CD4-positive, alpha-beta memory T cell (primary cell): ENCODE measurements at regions of chr11 and their contacts with region 1.

Region 1: GRCh38 chr11:96215110-96215782 is 127.7 kb downstream of the MAML2 start:
- DNase-seq: peak; percentile 41 to 47 (median 45)
- H3K4me3 ChIP-seq: peak overlapping the region in 1 of 2 donors; percentile 14
- H3K4me3 Mint-ChIP-seq: peak overlapping the region; percentile 37 to 82 (median 71)
- H3K27ac ChIP-seq: peak overlapping the region; percentile 62
- H3K27ac Mint-ChIP-seq: peak overlapping the region; percentile 89 to 96 (median 94)
- H3K4me1 ChIP-seq: peaks cover 99% of the 10 kb centered on the region
- H3K4me1 Mint-ChIP-seq: peaks cover 62 to 89% (median 77%) of the 10 kb centered on the region in 4 donors
- H3K27me3 ChIP-seq: no peaks in the 10 kb centered on the region
- H3K27me3 Mint-ChIP-seq: no peaks in the 10 kb centered on the region

Region 2: DNA sequence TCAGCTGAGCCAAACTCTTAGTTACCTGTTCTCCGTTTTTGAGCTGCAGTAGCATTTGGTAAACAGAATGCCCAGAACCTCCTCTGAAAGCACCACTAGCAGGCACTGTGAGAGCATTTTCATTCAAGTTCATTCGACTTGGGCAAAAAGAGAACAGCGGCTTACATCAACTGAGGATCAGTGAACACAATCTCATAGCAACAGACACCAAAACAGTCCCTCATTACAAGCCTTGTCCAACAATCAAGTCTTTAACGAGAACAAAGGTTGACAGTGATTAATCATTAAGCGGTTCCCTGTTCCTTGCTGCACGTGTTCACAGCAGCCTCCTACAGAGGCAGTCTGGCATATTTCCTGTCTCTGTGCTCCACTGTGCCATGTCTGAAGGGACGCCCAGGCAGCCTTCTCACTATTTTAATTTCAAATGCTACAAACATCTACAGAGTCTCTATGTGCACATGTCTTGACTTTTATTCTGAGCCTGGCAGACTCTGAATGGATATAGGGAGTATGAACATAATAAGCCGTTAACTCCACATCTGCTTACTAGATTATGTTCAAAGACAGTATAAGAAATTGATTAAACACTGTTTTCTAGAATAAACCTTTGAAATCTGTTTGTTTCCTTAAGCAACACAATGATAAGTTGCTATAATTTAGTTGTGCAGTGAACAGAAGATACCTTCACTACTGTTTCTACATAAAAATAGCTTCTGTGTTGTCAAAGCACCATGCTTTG is 203.0 kb before region 1 on chr11:
- CTCF ChIA-PET with region 1: no interaction called
- POLR2A ChIA-PET with region 1: interaction called, 4 read pairs
- intact Hi-C with region 1: loop called (anchors 5 kb)
- DNase-seq: peak; percentile 64 to 89 (median 75)
- H3K4me3 ChIP-seq: no peak overlapping the region
- H3K4me3 Mint-ChIP-seq: peak overlapping the region in 7 of 8 donors; percentile 22 to 83 (median 63)
- H3K27ac ChIP-seq: peak overlapping the region; percentile 44
- H3K27ac Mint-ChIP-seq: peak overlapping the region; percentile 64 to 97 (median 93)
- H3K4me1 ChIP-seq: peaks cover 59% of the 10 kb centered on the region
- H3K4me1 Mint-ChIP-seq: peaks cover 9 to 64% (median 52%) of the 10 kb centered on the region in 4 donors
- H3K27me3 ChIP-seq: no peaks in the 10 kb centered on the region
- H3K27me3 Mint-ChIP-seq: no peaks in the 10 kb centered on the region

Region 3: GRCh38 chr11:96075532-96075959 is 139.7 kb before region 1 on chr11:
- CTCF ChIA-PET with region 1: no interaction called
- POLR2A ChIA-PET with region 1: no interaction called
- intact Hi-C with region 1: no loop called
- DNase-seq: no peak
- H3K4me3 ChIP-seq: no peak overlapping the region
- H3K4me3 Mint-ChIP-seq: peak overlapping the region in 5 of 8 donors; percentile 19 to 63 (median 53)
- H3K27ac ChIP-seq: no peak overlapping the region
- H3K27ac Mint-ChIP-seq: peak overlapping the region; percentile 10 to 81 (median 26)
- H3K4me1 ChIP-seq: peaks cover 24% of the 10 kb centered on the region
- H3K4me1 Mint-ChIP-seq: peaks cover 33 to 55% (median 46%) of the 10 kb centered on the region in 4 donors
- H3K27me3 ChIP-seq: no peaks in the 10 kb centered on the region
- H3K27me3 Mint-ChIP-seq: no peaks in the 10 kb centered on the region

Region 4: GRCh38 chr11:96197801-96198701 is 17.2 kb before region 1 on chr11:
- CTCF ChIA-PET with region 1: interaction called, 7 read pairs
- POLR2A ChIA-PET with region 1: interaction called, 10 read pairs
- intact Hi-C with region 1: no loop called
- DNase-seq: no peak
- H3K4me3 ChIP-seq: no peak overlapping the region
- H3K4me3 Mint-ChIP-seq: peak overlapping the region in 7 of 8 donors; percentile 2 to 72 (median 46)
- H3K27ac ChIP-seq: no peak overlapping the region
- H3K27ac Mint-ChIP-seq: peak overlapping the region; percentile 61 to 93 (median 84)
- H3K4me1 ChIP-seq: peaks cover 71% of the 10 kb centered on the region
- H3K4me1 Mint-ChIP-seq: peaks cover 62 to 88% (median 74%) of the 10 kb centered on the region in 4 donors
- H3K27me3 ChIP-seq: no peaks in the 10 kb centered on the region
- H3K27me3 Mint-ChIP-seq: no peaks in the 10 kb centered on the region

Region 5: DNA sequence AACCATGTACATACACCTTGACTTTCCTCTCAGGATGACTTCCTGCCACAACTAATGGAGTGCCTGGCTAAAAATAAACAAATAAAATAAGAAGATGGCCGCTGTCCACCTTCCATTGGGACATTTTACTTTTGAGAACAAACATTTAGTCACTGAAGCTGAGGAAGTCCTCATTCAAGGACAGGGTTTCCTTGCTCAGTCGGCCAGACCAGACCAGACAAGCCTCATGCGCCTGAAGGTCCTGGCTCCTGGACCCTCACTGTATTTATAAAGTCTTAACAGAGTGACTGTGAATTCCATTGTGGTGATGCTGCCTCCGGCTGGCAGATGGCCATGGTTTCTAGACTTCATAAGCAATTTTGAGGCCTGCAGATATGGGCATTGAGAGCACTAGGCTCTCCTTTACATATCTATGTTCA is 13.2 kb after region 1 on chr11:
- CTCF ChIA-PET with region 1: interaction called, 4 read pairs
- POLR2A ChIA-PET with region 1: interaction called, 30 read pairs
- intact Hi-C with region 1: no loop called
- DNase-seq: no peak
- H3K4me3 ChIP-seq: no peak overlapping the region
- H3K4me3 Mint-ChIP-seq: no peak overlapping the region
- H3K27ac ChIP-seq: no peak overlapping the region
- H3K27ac Mint-ChIP-seq: peak overlapping the region in 6 of 7 donors; percentile 30 to 89 (median 48)
- H3K4me1 ChIP-seq: peaks cover 47% of the 10 kb centered on the region
- H3K4me1 Mint-ChIP-seq: peaks cover 51 to 78% (median 66%) of the 10 kb centered on the region in 4 donors
- H3K27me3 ChIP-seq: no peaks in the 10 kb centered on the region
- H3K27me3 Mint-ChIP-seq: no peaks in the 10 kb centered on the region

Region 6: DNA sequence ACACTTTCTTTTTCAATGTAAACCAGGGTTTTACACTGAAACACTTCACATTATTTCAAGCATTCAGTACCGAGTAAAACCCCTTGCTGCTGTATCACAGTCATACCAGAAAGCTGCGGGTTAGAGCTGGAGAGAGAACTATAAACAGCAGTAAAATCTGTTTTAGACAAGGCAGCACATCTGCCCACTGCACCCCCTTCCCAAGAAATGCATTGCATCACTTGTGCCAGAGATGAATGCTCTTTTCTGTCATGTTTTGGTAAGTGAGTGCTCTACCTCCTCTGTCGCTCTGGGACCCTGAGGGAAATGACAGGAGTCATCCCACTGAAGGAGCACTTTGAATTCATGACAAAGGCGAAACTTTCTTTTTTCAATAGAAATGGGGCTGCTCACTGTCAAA is 20.5 kb after region 1 on chr11:
- CTCF ChIA-PET with region 1: interaction called, 5 read pairs
- POLR2A ChIA-PET with region 1: interaction called, 12 read pairs
- intact Hi-C with region 1: no loop called
- DNase-seq: no peak
- H3K4me3 ChIP-seq: no peak overlapping the region
- H3K4me3 Mint-ChIP-seq: peak overlapping the region in 2 of 8 donors; percentile 6 to 39
- H3K27ac ChIP-seq: no peak overlapping the region
- H3K27ac Mint-ChIP-seq: peak overlapping the region in 5 of 7 donors; percentile 19 to 44 (median 35)
- H3K4me1 ChIP-seq: peaks cover 25% of the 10 kb centered on the region
- H3K4me1 Mint-ChIP-seq: peaks cover 24 to 44% (median 33%) of the 10 kb centered on the region in 4 donors
- H3K27me3 ChIP-seq: no peaks in the 10 kb centered on the region
- H3K27me3 Mint-ChIP-seq: no peaks in the 10 kb centered on the region

Region 7: GRCh38 chr11:96242971-96243647 is 27.9 kb after region 1 on chr11:
- CTCF ChIA-PET with region 1: interaction called, 5 read pairs
- POLR2A ChIA-PET with region 1: interaction called, 24 read pairs
- intact Hi-C with region 1: no loop called
- DNase-seq: peak; percentile 65 to 89 (median 68)
- H3K4me3 ChIP-seq: peak overlapping the region; percentile 33 to 57
- H3K4me3 Mint-ChIP-seq: peak overlapping the region; percentile 85 to 93 (median 90)
- H3K27ac ChIP-seq: peak overlapping the region; percentile 63
- H3K27ac Mint-ChIP-seq: peak overlapping the region; percentile 88 to 97 (median 93)
- H3K4me1 ChIP-seq: peaks cover 47% of the 10 kb centered on the region
- H3K4me1 Mint-ChIP-seq: peaks cover 28 to 57% (median 48%) of the 10 kb centered on the region in 4 donors
- H3K27me3 ChIP-seq: no peaks in the 10 kb centered on the region
- H3K27me3 Mint-ChIP-seq: no peaks in the 10 kb centered on the region

Region 8: DNA sequence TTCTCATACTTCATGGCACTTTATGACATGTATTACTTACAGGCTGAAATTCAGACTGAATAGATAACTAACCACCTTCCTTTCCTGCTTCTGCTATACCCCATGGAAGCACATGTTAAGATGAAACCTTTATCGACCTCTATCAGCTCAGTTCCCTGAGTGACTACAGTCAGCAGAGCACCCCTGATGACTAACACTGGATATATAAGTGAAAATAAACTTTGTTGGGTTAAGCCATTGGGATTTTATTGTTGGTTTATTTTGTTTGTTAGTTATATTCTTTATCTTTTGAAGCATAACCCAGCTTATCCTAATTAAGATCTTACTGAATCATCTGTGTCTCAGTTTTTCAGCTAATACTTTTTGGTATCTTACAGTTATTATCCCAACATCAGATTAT is 150.8 kb after region 1 on chr11:
- CTCF ChIA-PET with region 1: no interaction called
- POLR2A ChIA-PET with region 1: no interaction called
- intact Hi-C with region 1: no loop called
- DNase-seq: no peak
- H3K4me3 ChIP-seq: no peak overlapping the region
- H3K4me3 Mint-ChIP-seq: no peak overlapping the region
- H3K27ac ChIP-seq: no peak overlapping the region
- H3K27ac Mint-ChIP-seq: no peak overlapping the region
- H3K4me1 ChIP-seq: no peaks in the 10 kb centered on the region
- H3K4me1 Mint-ChIP-seq: peaks cover 0 to 4% (median under 1%) of the 10 kb centered on the region in 4 donors
- H3K27me3 ChIP-seq: no peaks in the 10 kb centered on the region
- H3K27me3 Mint-ChIP-seq: no peaks in the 10 kb centered on the region

Region 9: DNA sequence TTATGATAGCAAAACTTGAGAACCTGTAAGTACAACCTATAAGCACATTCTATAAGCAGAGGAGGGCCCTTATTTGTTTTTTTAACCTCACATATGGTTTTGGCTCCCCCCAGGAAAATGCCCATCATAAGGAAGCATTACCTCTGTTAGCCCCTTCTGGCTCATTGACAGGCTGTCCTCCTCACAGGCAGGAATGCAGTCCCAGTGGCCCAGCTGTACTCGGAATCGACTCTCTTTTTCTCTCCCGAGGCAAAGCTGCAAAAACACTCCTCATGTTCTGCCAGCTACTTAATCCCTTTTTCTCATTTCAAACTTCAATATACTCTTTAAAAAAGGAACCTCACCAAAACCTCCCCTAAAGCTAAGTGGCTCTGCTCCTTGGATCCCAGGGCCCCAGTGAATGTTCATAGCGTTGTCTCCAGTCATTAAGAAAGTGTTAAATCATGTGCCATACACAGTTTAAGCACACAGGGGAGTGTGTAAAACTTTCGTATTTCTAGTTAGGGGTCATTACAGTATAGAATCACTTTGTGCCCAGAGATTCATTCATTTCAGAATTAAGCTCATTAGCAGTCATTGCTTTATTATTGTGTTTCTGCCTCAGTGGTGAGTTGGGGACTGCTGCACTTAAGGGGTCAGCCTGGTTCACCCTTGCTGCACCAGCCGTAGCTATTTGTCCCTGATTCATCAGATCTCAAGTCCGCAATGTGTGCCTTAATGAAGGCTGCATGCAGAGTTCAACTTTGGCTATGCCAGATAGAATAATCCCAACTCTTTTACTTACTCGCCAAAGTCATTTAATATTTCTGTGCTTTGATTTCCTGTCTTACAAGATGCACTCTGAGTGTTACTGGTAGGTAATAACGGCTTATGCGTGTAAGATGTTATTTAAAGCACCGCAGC is 232.2 kb after region 1 on chr11:
- CTCF ChIA-PET with region 1: no interaction called
- POLR2A ChIA-PET with region 1: no interaction called
- intact Hi-C with region 1: no loop called
- DNase-seq: no peak
- H3K4me3 ChIP-seq: no peak overlapping the region
- H3K4me3 Mint-ChIP-seq: no peak overlapping the region
- H3K27ac ChIP-seq: no peak overlapping the region
- H3K27ac Mint-ChIP-seq: no peak overlapping the region
- H3K4me1 ChIP-seq: no peaks in the 10 kb centered on the region
- H3K4me1 Mint-ChIP-seq: no peaks in the 10 kb centered on the region
- H3K27me3 ChIP-seq: no peaks in the 10 kb centered on the region
- H3K27me3 Mint-ChIP-seq: peaks cover 13 to 18% of the 10 kb centered on the region in 2 donors